Body of pancreas (tissue), 4 donors: ENCODE measurements at regions of chr12 and their contacts with region 1.

Region 1: GRCh38 chr12:120649442-120650232 is 9.2 kb downstream of the CABP1 start:
- DNase-seq: no peak
- ATAC-seq: no peak
- H3K4me3 ChIP-seq: no peak overlapping the region
- H3K27ac ChIP-seq: no peak overlapping the region
- H3K4me1 ChIP-seq: peaks cover 8% of the 10 kb centered on the region
- H3K27me3 ChIP-seq: no peaks in the 10 kb centered on the region
- CTCF ChIP-seq: no peak
- POLR2A ChIP-seq: no peak

Region 2: GRCh38 chr12:120719496-120720233 is 70.0 kb after region 1 on chr12:
- intact Hi-C with region 1: loop called (anchors 5 kb)
- DNase-seq: peak in 1 of 4 donors; percentile 44
- ATAC-seq: no peak
- H3K4me3 ChIP-seq: no peak overlapping the region
- H3K27ac ChIP-seq: peak overlapping the region; percentile 18 to 52 (median 30)
- H3K4me1 ChIP-seq: peaks cover 22% of the 10 kb centered on the region
- H3K27me3 ChIP-seq: no peaks in the 10 kb centered on the region
- CTCF ChIP-seq: no peak
- POLR2A ChIP-seq: no peak

Region 3: DNA sequence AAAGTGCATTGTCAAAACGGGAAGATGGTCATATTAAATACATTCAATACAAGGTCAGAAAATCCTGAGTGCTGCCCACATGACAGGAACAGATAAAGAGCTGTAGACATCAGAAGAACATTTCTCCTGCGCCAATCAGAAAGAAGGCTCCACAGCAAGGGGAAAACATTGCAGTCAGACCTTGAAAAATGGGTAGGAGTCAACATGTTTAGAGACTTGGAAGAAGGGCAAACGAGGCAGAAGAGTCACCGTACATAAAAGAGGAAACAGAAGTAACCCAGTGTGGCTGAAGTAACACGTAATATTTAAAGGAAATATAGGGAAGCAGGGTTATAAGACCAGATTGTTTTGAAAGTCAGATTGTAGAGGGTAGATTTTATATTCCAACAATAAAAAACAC is 242.6 kb after region 1 on chr12:
- intact Hi-C with region 1: no loop called
- DNase-seq: no peak
- ATAC-seq: no peak
- H3K4me3 ChIP-seq: no peak overlapping the region
- H3K27ac ChIP-seq: no peak overlapping the region
- H3K4me1 ChIP-seq: peaks cover 4% of the 10 kb centered on the region
- H3K27me3 ChIP-seq: no peaks in the 10 kb centered on the region
- CTCF ChIP-seq: no peak
- POLR2A ChIP-seq: no peak